Right ventricle myocardium inferior (tissue), 1 donor: ENCODE measurements at regions of chr6 and their contacts with region 1.

Region 1: GRCh38 chr6:31827286-31828079 is at the start of gene HSPA1B:
- DNase-seq: peak; percentile 100
- ATAC-seq: peak; percentile 96
- total RNA-seq, gene HSPA1B: 215 TPM

Region 2: DNA sequence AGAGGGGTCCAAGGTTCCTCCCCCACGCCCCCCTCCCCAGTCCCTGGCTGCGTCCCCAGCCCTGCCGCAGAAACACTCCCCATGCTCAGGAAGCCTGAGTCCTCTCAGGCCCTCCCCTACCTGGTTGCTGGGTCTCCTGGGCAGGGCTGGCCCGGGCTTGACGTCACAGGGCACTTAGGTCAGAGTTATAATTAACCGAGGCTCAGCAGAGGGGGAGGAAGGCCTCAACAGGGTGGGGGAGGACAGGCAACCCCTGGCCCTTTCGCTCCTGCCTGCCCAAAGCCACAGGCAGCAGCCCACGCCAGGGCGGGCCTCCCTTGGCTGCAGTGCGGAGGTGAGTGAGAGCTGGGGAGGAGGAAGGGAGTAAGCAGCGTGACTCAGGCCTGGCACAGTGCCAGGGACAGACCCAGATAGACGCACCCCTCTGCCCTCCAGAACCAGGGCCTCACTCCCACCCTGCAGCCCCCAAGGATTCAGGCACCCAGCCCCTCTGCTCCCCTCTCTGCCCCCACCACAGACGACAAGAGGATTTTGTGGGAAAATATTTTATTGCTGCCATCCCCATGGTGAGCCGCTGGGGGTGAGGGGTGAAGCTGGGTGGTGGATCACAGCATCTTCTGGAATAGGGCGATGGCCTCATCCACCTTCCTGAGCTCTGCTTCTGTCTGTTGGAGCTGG is 50.4 kb before region 1 on chr6 and contains the start of gene VWA7:
- intact Hi-C with region 1: loop called (anchors 1 kb)
- DNase-seq: peak; percentile 85
- ATAC-seq: peak; percentile 81
- total RNA-seq, gene VWA7: 12.1 TPM

Region 3: GRCh38 chr6:31795616-31796298 is 31.7 kb before region 1 on chr6 and contains the start of gene VARS1:
- intact Hi-C with region 1: loop called (anchors 2 kb)
- DNase-seq: peak; percentile 97
- ATAC-seq: peak; percentile 96
- total RNA-seq, gene VARS1: 29.7 TPM